Ascending aorta (tissue), 2 donors: ENCODE measurements at regions of chr12 and their contacts with region 1.

Region 1: DNA sequence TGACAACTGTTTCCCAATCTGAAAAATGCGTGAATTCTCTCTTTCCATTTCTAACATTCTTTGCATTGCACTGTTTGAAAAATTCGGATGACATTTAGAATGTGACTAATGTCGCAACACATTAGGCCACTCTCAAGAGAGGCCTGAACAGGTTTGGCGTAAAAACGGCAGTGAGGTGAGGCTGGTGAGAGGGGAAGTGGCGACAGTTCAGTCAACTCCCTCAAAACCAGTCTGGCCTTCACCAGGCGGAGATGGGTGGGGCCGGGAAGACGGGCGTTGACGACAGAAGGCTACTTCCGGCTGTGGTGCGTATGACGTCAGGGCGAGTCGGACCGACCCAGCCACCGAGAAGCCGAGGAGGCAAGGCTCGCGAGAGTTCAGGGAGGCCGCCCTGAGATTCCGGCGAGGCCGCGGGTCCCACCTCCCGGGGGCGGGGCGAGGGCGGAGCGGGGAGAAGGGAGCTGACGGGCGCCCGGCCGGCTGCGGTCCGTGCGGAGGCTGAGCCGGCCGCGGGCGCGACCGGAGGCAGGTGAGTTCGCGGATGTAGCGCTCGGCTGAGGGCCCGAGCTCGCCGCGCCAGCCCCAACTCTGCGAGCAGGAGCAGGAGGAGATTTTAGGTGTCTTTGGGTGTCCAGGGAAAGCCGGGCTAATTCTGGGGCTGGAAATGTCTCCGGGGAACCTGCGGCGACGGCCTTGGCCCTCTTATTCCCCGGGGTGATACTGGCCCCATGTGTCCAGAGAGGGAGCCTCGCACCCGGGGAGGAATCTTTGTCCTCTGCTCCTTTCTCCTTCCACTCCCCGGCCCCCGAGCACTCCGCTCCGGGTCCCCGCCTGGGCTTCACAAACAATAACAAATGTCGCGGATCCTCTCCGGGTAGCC is at the start of gene STK38L:
- DNase-seq: peak; percentile 91 to 99
- H3K4me3 ChIP-seq: peak within 1 kb of the TSS; percentile 74 to 98
- H3K27ac ChIP-seq: peak within 1 kb of the TSS; percentile 96 to 98
- H3K4me1 ChIP-seq: peaks cover 0 to 4% of the 10 kb centered on the region in 2 donors
- H3K27me3 ChIP-seq: no peaks in the 10 kb centered on the region
- CTCF ChIP-seq: peak in 2 of 3 experiments; percentile 6 to 29
- total RNA-seq, gene STK38L: 137 TPM

Region 2: GRCh38 chr12:27024291-27024690 is 219.8 kb before region 1 on chr12:
- intact Hi-C with region 1: loop called (anchors 5 kb)
- DNase-seq: no peak
- H3K4me3 ChIP-seq: peak overlapping the region in 1 of 2 donors; percentile 81
- H3K27ac ChIP-seq: no peak overlapping the region
- H3K4me1 ChIP-seq: peaks cover 10 to 16% of the 10 kb centered on the region in 2 donors
- H3K27me3 ChIP-seq: no peaks in the 10 kb centered on the region
- CTCF ChIP-seq: no peak

Region 3: GRCh38 chr12:27104546-27104945 is 139.5 kb before region 1 on chr12:
- intact Hi-C with region 1: no loop called
- DNase-seq: no peak
- H3K4me3 ChIP-seq: no peak overlapping the region
- H3K27ac ChIP-seq: no peak overlapping the region
- H3K4me1 ChIP-seq: peaks cover 0 to 2% of the 10 kb centered on the region in 2 donors
- H3K27me3 ChIP-seq: no peaks in the 10 kb centered on the region
- CTCF ChIP-seq: no peak

Region 4: GRCh38 chr12:27179400-27180214 is 64.4 kb before region 1 on chr12:
- intact Hi-C with region 1: loop called (anchors 1 kb)
- DNase-seq: no peak
- H3K4me3 ChIP-seq: peak overlapping the region in 1 of 2 donors; percentile 31
- H3K27ac ChIP-seq: peak overlapping the region; percentile 92 to 95
- H3K4me1 ChIP-seq: peaks cover 19 to 34% of the 10 kb centered on the region in 2 donors
- H3K27me3 ChIP-seq: no peaks in the 10 kb centered on the region
- CTCF ChIP-seq: no peak

Region 5: GRCh38 chr12:27226407-27226929 is 17.6 kb before region 1 on chr12:
- intact Hi-C with region 1: no loop called
- DNase-seq: no peak
- H3K4me3 ChIP-seq: no peak overlapping the region
- H3K27ac ChIP-seq: peak overlapping the region; percentile 30 to 62
- H3K4me1 ChIP-seq: peaks cover 0 to 3% of the 10 kb centered on the region in 2 donors
- H3K27me3 ChIP-seq: no peaks in the 10 kb centered on the region
- CTCF ChIP-seq: no peak

Region 6: GRCh38 chr12:27284751-27285150 is 40.7 kb after region 1 on chr12:
- intact Hi-C with region 1: loop called (anchors 5 kb)
- DNase-seq: no peak
- H3K4me3 ChIP-seq: peak overlapping the region; percentile 12 to 16
- H3K27ac ChIP-seq: peak overlapping the region; percentile 84 to 90
- H3K4me1 ChIP-seq: peaks cover 0 to 65% of the 10 kb centered on the region in 2 donors
- H3K27me3 ChIP-seq: no peaks in the 10 kb centered on the region
- CTCF ChIP-seq: no peak